GM12878 (cell line): ENCODE measurements at regions of chr13 and their contacts with region 1.

Region 1: GRCh38 chr13:30607908-30608307 is 9.8 kb upstream of the USPL1 start:
- DNase-seq: peak; percentile 85
- ATAC-seq: peak; percentile 98
- H3K4me3 ChIP-seq: no peak overlapping the region
- H3K27ac ChIP-seq: no peak overlapping the region
- H3K4me1 ChIP-seq: peaks cover 17% of the 10 kb centered on the region
- H3K27me3 ChIP-seq: no peaks in the 10 kb centered on the region
- CTCF ChIP-seq: no peak
- EP300 ChIP-seq: peak; percentile 69 to 75; a peak in 3 of 4 replicates
- POLR2A ChIP-seq: no peak
- RAD21 ChIP-seq: no peak

Region 2: GRCh38 chr13:30581582-30581981 is 26.3 kb before region 1 on chr13:
- CTCF ChIA-PET with region 1: interaction called, 12 read pairs
- POLR2A ChIA-PET with region 1: interaction called, 3 read pairs
- RAD21 ChIA-PET with region 1: interaction called, 3 read pairs
- SMC1A ChIA-PET with region 1: interaction called, 6 read pairs
- in situ Hi-C with region 1: no loop called
- intact Hi-C with region 1: no loop called
- DNase-seq: no peak
- ATAC-seq: peak; percentile 20; the same call in 1 of the 3 replicates
- H3K4me3 ChIP-seq: no peak overlapping the region
- H3K27ac ChIP-seq: no peak overlapping the region
- H3K4me1 ChIP-seq: peaks cover 12% of the 10 kb centered on the region; the same call in 1 of the 2 replicates
- H3K27me3 ChIP-seq: peaks cover 2 to 3% of the 10 kb centered on the region in 2 experiments; a peak in 1 of 4 replicates
- CTCF ChIP-seq: peak; percentile 26 to 62 (median 50); a peak in 5 of 6 replicates
- EP300 ChIP-seq: no peak
- POLR2A ChIP-seq: no peak
- RAD21 ChIP-seq: peak; percentile 69

Region 3: GRCh38 chr13:30708541-30708940 is 100.6 kb after region 1 on chr13:
- CTCF ChIA-PET with region 1: no interaction called
- POLR2A ChIA-PET with region 1: no interaction called
- RAD21 ChIA-PET with region 1: no interaction called
- SMC1A ChIA-PET with region 1: no interaction called
- in situ Hi-C with region 1: no loop called
- intact Hi-C with region 1: no loop called
- DNase-seq: no peak
- ATAC-seq: no peak
- H3K4me3 ChIP-seq: no peak overlapping the region
- H3K27ac ChIP-seq: no peak overlapping the region
- H3K4me1 ChIP-seq: peaks cover 9% of the 10 kb centered on the region
- H3K27me3 ChIP-seq: no peaks in the 10 kb centered on the region
- CTCF ChIP-seq: no peak
- EP300 ChIP-seq: no peak
- POLR2A ChIP-seq: no peak
- RAD21 ChIP-seq: no peak